Activated CD8-positive, alpha-beta T cell treated with anti-CD3 and anti-CD28 coated beads, Interleukin-2, amount 10 ng/mL, durations not matched to agents 7 days and 5 days (primary cell): ENCODE measurements at regions of chr13 and their contacts with region 1.

Region 1: GRCh38 chr13:76903544-76904162 is 17.4 kb upstream of the KCTD12 start:
- DNase-seq: peak; percentile 78
- ATAC-seq: peak; percentile 61
- H3K4me3 Mint-ChIP-seq: no peak overlapping the region
- H3K27ac Mint-ChIP-seq: no peak overlapping the region
- H3K4me1 Mint-ChIP-seq: no peaks in the 10 kb centered on the region
- H3K27me3 Mint-ChIP-seq: peaks cover 24% of the 10 kb centered on the region

Region 2: GRCh38 chr13:76822698-76823267 is 80.9 kb before region 1 on chr13:
- CTCF ChIA-PET with region 1: interaction called, 10 read pairs
- POLR2A ChIA-PET with region 1: no interaction called
- DNase-seq: no peak
- ATAC-seq: peak; percentile 67
- H3K4me3 Mint-ChIP-seq: no peak overlapping the region
- H3K27ac Mint-ChIP-seq: no peak overlapping the region
- H3K4me1 Mint-ChIP-seq: no peaks in the 10 kb centered on the region
- H3K27me3 Mint-ChIP-seq: peaks cover 6% of the 10 kb centered on the region

Region 3: GRCh38 chr13:76879203-76879882 is 24.3 kb before region 1 on chr13:
- CTCF ChIA-PET with region 1: interaction called, 10 read pairs
- POLR2A ChIA-PET with region 1: no interaction called
- DNase-seq: peak; percentile 75
- ATAC-seq: peak; percentile 98
- H3K4me3 Mint-ChIP-seq: peak overlapping the region; percentile 63
- H3K27ac Mint-ChIP-seq: peak overlapping the region; percentile 72
- H3K4me1 Mint-ChIP-seq: peaks cover 32% of the 10 kb centered on the region
- H3K27me3 Mint-ChIP-seq: peaks cover 3% of the 10 kb centered on the region